ENCODE measurements at regions of chr19 and their contacts with region 1.

Region 1: GRCh38 chr19:48290771-48291488 is 21.0 kb downstream of the ZNF114 start:
- DNase-seq: peak; percentile 46 to 61 (median 60)
- H3K4me3 ChIP-seq: peak overlapping the region; percentile 9 to 79 (median 58)
- H3K27ac ChIP-seq: no peak overlapping the region
- H3K4me1 ChIP-seq: peaks cover 0 to 10% (median 7%) of the 10 kb centered on the region in 4 experiments
- H3K27me3 ChIP-seq: peaks cover 0 to 2% (median 0%) of the 10 kb centered on the region in 5 experiments

Region 2: DNA sequence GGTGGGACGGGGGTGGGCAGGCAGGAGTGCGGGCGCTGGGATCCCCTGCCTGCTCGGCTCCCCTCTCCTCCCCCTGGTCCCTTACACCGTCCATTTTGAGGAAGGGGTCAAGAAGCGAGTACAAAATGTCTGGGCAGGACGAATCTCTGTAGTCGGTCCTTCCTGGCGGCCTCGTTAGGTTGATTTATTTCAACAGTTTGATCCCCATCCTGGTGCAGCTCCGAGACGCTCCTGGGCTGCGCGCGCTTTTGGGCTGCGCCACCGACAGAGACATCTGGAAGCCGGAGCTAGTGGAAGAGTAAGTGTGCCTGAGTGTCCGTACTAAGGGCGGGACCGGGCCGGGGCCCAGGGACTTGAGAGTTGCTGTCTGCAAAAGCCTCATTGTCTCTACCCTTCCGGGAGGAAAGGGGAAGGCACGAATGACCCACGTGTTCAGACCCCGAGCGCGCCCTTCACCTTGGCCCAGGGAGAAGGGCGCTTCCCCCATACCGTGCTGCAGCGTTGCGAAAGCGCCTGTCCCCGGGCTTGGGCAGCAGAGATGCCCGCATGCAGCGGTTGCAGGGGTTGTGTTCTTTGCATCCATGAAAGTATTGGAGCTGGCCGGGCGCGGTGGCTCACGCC is 19.3 kb before region 1 on chr19:
- CTCF ChIA-PET with region 1: interaction called, 53 read pairs
- POLR2A ChIA-PET with region 1: interaction called, 3 read pairs
- DNase-seq: peak; percentile 44 to 71 (median 59)
- H3K4me3 ChIP-seq: peak overlapping the region; percentile 37 to 92 (median 78)
- H3K27ac ChIP-seq: peak overlapping the region in 1 of 2 experiments; percentile 39
- H3K4me1 ChIP-seq: peaks cover 0 to 9% (median 3%) of the 10 kb centered on the region in 4 experiments
- H3K27me3 ChIP-seq: no peaks in the 10 kb centered on the region

Region 3: GRCh38 chr19:48301886-48302599 is 11.1 kb after region 1 on chr19:
- CTCF ChIA-PET with region 1: no interaction called
- POLR2A ChIA-PET with region 1: no interaction called
- DNase-seq: no peak
- H3K4me3 ChIP-seq: no peak overlapping the region
- H3K27ac ChIP-seq: no peak overlapping the region
- H3K4me1 ChIP-seq: no peaks in the 10 kb centered on the region
- H3K27me3 ChIP-seq: no peaks in the 10 kb centered on the region